CD14-positive monocyte (primary cell): ENCODE measurements at regions of chr9 and their contacts with region 1.

Region 1: DNA sequence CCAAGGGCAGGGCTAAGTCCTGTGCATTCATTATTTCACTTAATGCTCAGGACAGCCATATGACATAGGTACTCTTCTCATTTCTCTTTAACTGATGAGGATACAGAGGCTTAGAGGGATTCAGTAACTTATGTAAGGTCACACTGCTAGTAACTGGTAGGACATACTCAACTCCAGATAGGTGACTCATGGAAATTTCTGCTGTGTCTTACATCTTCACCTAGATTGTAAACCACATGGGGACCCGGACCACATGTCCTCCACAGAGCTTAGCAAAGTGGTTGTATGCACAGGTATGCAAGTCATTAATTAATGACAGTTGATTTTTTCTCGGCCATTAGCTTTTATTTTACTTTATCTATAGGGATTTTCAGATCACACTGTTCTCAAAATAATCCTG is 29.3 kb downstream of the SLC1A1 start:
- DNase-seq: no peak
- H3K4me3 ChIP-seq: no peak overlapping the region
- H3K4me3 Mint-ChIP-seq: no peak overlapping the region
- H3K27ac ChIP-seq: no peak overlapping the region
- H3K27ac Mint-ChIP-seq: no peak overlapping the region
- H3K4me1 ChIP-seq: no peaks in the 10 kb centered on the region
- H3K4me1 Mint-ChIP-seq: no peaks in the 10 kb centered on the region
- H3K27me3 ChIP-seq: no peaks in the 10 kb centered on the region
- H3K27me3 Mint-ChIP-seq: peaks cover 0 to 3% (median under 1%) of the 10 kb centered on the region in 3 donors
- CTCF ChIP-seq: no peak

Region 2: DNA sequence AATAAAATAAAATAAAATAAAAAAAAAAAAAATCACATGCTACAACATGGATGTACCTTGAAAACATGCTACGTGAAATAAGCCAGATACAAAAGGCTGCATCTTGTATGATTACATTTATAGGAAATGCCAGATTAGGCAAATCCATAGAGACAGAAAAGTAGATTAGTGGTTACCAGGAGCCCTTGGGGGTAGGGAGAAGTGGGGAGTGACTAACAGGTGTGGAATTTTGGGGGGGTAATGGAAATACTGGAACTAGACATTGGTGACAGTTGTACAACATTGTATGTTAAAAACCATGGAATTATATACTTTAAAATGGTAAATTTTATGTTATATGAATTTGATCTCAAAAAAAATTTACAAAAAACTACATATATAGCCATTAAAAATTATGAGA is 18.0 kb after region 1 on chr9:
- intact Hi-C with region 1: loop called in 1 of 2 experiments (anchors 2 kb)
- DNase-seq: no peak
- H3K4me3 ChIP-seq: no peak overlapping the region
- H3K4me3 Mint-ChIP-seq: no peak overlapping the region
- H3K27ac ChIP-seq: no peak overlapping the region
- H3K27ac Mint-ChIP-seq: no peak overlapping the region
- H3K4me1 ChIP-seq: no peaks in the 10 kb centered on the region
- H3K4me1 Mint-ChIP-seq: no peaks in the 10 kb centered on the region
- H3K27me3 ChIP-seq: no peaks in the 10 kb centered on the region
- H3K27me3 Mint-ChIP-seq: peaks cover 2 to 10% (median 4%) of the 10 kb centered on the region in 3 donors
- CTCF ChIP-seq: no peak

Region 3: DNA sequence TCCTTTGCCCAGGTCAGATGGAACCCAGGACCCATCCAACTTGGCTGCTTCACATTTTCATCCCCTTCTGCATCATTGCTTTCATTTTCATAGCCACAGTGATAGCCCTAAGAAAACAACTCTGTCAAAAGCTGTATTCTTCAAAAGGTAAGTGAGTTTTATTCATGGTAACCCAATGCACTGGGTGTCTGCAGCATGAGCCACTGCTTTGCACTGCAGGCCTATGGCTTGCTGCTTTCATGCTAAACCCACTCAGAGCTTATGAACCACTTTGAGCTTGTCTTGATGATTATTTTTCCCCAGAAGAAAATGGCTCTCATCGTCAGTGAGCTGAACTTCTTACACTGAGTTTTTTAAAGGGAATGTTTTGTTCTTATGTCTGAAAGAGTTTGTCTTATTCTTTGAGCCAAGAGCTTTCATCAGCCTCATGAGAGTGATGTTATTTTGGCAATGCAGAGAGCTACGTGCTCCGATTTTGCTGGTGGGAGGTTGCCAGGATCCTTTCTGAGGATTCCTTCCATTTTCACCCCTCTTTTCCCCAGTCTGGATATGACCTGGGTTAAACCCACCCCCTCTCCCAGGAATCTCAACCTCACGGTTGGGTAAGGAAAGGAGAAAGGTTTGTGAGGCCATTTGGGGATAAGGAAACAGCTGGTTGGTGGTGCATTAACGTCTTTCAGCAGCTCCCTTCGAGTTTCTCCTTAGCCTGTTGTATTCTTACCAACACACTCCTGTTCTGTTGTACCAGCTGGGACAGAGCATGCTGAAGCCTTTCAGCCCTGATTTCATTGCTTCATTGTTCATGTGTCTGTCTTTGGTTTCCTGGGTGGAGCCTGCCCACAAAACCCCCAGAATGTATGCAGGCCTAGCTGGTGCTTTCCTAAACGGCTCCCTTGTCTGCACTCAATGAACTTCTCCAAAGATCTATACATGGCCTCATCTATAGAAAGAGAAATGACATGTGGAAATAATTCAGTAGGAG is 1038.3 kb after region 1 on chr9:
- intact Hi-C with region 1: no loop called
- DNase-seq: peak; percentile 74 to 92 (median 86)
- H3K4me3 ChIP-seq: peak overlapping the region in 1 of 3 experiments; percentile 34
- H3K4me3 Mint-ChIP-seq: peak overlapping the region in 1 of 2 donors; percentile 76
- H3K27ac ChIP-seq: peak overlapping the region; percentile 54 to 87
- H3K27ac Mint-ChIP-seq: peak overlapping the region; percentile 83 to 99 (median 95)
- H3K4me1 ChIP-seq: peaks cover 69 to 72% of the 10 kb centered on the region in 2 donors
- H3K4me1 Mint-ChIP-seq: peaks cover 74% of the 10 kb centered on the region
- H3K27me3 ChIP-seq: no peaks in the 10 kb centered on the region
- H3K27me3 Mint-ChIP-seq: peaks cover 0 to 3% (median under 1%) of the 10 kb centered on the region in 3 donors
- CTCF ChIP-seq: no peak